ENCODE measurements at regions of chr4 and their contacts with region 1.

Region 1: GRCh38 chr4:6250235-6250983 is 19.2 kb upstream of the WFS1 start:
- DNase-seq: peak; percentile 70

Region 2: GRCh38 chr4:6264225-6264540 is 13.8 kb after region 1 on chr4:
- CTCF ChIA-PET with region 1: interaction called, 15 read pairs
- POLR2A ChIA-PET with region 1: no interaction called
- DNase-seq: no peak